ENCODE measurements at regions of chr15 and their contacts with region 1.

Region 1: DNA sequence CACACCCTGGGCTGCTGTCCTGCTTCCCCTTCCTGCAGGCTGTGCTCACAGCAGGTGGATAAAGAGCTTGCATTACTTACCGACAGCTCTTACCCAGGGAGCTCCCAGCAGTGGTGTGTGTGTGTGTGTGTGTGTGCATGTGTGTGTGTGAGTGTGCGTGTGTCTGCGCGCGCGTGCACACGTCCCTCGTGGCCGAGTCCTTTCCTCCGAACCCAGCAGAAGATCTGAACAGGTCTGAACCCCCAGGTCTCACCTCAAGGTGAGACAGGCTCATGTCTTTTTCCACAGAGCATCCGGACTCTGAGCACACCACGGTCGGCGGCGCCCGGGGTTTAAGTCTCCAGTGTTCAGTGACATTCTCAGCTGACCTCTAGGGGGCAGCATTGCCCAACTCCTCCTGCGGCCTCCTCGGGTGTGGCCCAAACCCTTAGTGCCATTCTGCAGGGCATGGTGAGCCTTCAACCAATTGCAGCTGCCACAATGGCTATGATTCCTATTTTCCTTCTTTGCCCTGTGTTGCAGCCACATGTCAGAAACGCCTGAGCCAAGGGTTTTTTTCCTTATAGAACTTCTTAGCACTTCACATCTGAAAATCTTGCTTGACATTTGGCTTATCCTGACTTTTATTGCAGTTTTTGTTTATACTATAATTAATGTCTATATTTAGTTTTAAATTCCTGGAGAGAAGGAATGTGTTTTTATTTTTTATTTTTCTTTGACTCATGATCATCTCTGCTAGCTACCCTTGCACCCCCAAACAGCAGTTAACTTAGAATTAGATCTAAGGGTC is 64.1 kb upstream of the KLHL25 start:
- H3K4me3 ChIP-seq: peak overlapping the region; percentile 14
- H3K27ac ChIP-seq: no peak overlapping the region
- H3K4me1 ChIP-seq: no peaks in the 10 kb centered on the region
- CTCF ChIP-seq: peak; percentile 85

Region 2: DNA sequence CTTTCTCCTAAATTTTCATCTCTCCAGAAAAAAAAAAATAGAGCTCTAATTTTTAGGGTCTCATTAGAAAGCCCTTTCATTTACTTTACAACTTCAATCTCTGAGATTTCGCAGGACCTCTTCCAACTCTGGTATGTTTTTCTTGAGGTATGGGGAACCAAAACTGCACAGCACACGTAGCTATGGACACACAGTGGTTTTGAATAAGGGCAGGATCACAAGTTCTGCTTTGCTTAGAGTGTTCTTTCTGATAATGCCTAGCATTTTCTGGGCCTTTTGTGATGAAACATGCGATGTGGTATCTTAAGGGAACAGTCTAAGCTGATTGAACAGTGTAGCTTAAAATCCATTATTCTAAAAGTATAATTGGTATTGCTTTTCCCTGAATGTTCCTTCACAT is 1085.1 kb before region 1 on chr15:
- CTCF ChIA-PET with region 1: no interaction called
- POLR2A ChIA-PET with region 1: no interaction called
- H3K4me3 ChIP-seq: no peak overlapping the region
- H3K27ac ChIP-seq: no peak overlapping the region
- H3K4me1 ChIP-seq: no peaks in the 10 kb centered on the region
- CTCF ChIP-seq: no peak

Region 3: GRCh38 chr15:85785887-85786780 is 72.6 kb before region 1 on chr15:
- CTCF ChIA-PET with region 1: no interaction called
- POLR2A ChIA-PET with region 1: no interaction called
- H3K4me3 ChIP-seq: no peak overlapping the region
- H3K27ac ChIP-seq: no peak overlapping the region
- H3K4me1 ChIP-seq: peaks cover 13% of the 10 kb centered on the region
- CTCF ChIP-seq: no peak

Region 4: DNA sequence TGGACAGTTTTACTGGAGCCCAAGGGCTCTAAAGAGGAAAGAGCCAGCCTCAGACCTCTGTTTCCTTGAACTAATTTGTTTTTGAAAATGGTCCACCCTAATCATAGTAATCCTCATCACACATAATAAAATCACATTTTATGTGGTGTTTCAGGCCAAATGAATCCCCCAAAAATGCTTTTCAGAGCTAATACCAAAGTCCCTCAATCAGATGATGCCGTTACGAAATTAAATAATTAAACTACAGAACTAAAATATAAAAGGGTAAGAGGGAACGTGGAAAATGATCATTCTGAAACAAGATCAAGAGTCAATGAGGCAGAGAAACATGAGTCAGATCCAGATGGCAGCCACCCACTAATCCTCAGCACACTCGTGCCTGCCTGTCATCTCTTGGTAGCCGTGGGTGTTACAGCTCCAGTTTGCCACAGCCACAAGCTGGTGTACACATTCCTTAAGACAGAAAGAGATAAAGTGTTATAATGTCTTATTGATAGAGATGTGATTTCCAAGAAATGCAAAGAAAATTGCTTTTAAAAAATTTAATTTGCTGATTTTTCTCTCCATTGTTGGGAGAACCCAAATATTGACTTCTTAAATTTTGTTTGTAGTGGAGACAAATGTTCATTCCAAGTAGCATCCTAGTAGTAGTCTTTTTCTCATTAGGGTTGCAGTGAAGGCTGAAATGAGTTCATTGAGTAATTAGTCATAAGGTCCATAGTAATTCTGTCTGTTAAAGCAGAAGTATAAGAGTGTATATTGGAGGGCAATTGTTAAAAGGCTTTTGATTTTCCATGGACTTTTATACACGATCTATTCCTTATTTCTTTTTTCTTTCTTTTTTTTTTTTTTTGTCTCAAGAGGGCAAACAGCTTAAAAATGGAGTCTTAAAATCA is 325.1 kb after region 1 on chr15:
- CTCF ChIA-PET with region 1: interaction called, 11 read pairs
- POLR2A ChIA-PET with region 1: no interaction called
- H3K4me3 ChIP-seq: no peak overlapping the region
- H3K27ac ChIP-seq: no peak overlapping the region
- H3K4me1 ChIP-seq: peaks cover 7% of the 10 kb centered on the region
- CTCF ChIP-seq: no peak